Natural killer cell (primary cell): ENCODE measurements at regions of chr1 and their contacts with region 1.

Region 1: GRCh38 chr1:226827968-226828513 is 42.4 kb upstream of the PSEN2 start:
- DNase-seq: peak; percentile 92 to 97
- ATAC-seq: peak; percentile 98 to 100 (median 100)
- H3K4me3 ChIP-seq: no peak overlapping the region
- H3K4me3 Mint-ChIP-seq: peak overlapping the region; percentile 59
- H3K27ac ChIP-seq: peak overlapping the region; percentile 36
- H3K27ac Mint-ChIP-seq: peak overlapping the region; percentile 84
- H3K4me1 ChIP-seq: peaks cover 12% of the 10 kb centered on the region
- H3K4me1 Mint-ChIP-seq: peaks cover 8 to 14% of the 10 kb centered on the region in 2 donors
- H3K27me3 ChIP-seq: no peaks in the 10 kb centered on the region
- H3K27me3 Mint-ChIP-seq: no peaks in the 10 kb centered on the region
- CTCF ChIP-seq: peak; percentile 96

Region 2: DNA sequence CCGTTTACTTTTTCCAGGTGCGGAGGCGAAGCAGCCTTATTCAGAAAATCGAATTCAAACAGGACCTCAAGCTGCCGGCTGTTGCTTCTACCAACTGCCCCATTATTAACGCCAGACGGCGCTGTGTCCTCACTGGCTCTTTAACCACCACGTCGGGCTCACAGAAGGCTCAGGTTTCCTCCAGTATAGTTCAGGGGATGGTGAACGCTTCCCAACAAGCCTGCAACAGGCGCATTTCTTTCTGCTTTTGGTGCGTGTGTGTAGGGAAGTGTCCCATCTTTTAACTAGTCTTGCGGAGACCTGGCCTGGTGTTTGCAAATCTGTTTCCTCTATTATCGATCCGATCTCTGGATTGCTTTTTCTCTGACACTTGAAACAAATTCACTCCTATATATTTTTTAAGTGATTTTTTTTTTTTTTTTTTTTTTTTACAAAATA is 280.3 kb before region 1 on chr1:
- intact Hi-C with region 1: loop called (anchors 5 kb)
- DNase-seq: peak; percentile 45 to 80
- ATAC-seq: peak; percentile 68 to 81 (median 75)
- H3K4me3 ChIP-seq: no peak overlapping the region
- H3K4me3 Mint-ChIP-seq: peak overlapping the region; percentile 56
- H3K27ac ChIP-seq: no peak overlapping the region
- H3K27ac Mint-ChIP-seq: no peak overlapping the region
- H3K4me1 ChIP-seq: peaks cover 25% of the 10 kb centered on the region
- H3K4me1 Mint-ChIP-seq: peaks cover 6 to 17% of the 10 kb centered on the region in 2 donors
- H3K27me3 ChIP-seq: peaks cover 29% of the 10 kb centered on the region
- H3K27me3 Mint-ChIP-seq: peaks cover 42 to 51% of the 10 kb centered on the region in 2 donors
- CTCF ChIP-seq: peak; percentile 62

Region 3: GRCh38 chr1:226626577-226626956 is 201.5 kb before region 1 on chr1:
- intact Hi-C with region 1: loop called (anchors 1 kb)
- DNase-seq: peak; percentile 75 to 87
- ATAC-seq: peak; percentile 95 to 100 (median 97)
- H3K4me3 ChIP-seq: peak overlapping the region; percentile 28
- H3K4me3 Mint-ChIP-seq: peak overlapping the region; percentile 69
- H3K27ac ChIP-seq: no peak overlapping the region
- H3K27ac Mint-ChIP-seq: peak overlapping the region; percentile 38 to 51
- H3K4me1 ChIP-seq: peaks cover 9% of the 10 kb centered on the region
- H3K4me1 Mint-ChIP-seq: peaks cover 16 to 19% of the 10 kb centered on the region in 2 donors
- H3K27me3 ChIP-seq: no peaks in the 10 kb centered on the region
- H3K27me3 Mint-ChIP-seq: peaks cover 0 to 3% of the 10 kb centered on the region in 2 donors
- CTCF ChIP-seq: peak; percentile 97

Region 4: DNA sequence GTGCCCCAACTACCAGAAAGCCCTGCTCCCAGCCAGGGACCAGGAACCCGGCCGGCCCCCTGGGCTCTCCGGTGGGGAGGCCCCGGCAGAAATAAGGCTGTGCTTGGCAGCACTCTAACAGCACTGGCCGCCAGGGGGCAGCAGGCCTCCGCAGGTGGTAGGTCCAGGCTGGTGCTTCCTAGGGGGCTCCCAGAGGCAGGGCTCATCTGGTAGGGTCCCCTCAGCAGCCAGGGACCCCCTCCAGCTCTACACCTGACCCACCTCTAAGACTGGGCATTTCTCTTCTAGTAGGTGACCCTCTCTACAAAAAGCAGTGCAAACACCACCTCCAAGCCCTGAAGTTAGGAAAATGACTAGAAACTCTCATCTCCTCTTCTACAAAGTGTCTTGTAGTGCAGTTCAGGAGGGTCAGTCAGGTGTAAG is 193.9 kb before region 1 on chr1:
- intact Hi-C with region 1: loop called (anchors 1 kb)
- DNase-seq: peak; percentile 82 to 91
- ATAC-seq: peak; percentile 88 to 98 (median 92)
- H3K4me3 ChIP-seq: no peak overlapping the region
- H3K4me3 Mint-ChIP-seq: no peak overlapping the region
- H3K27ac ChIP-seq: peak overlapping the region; percentile 47
- H3K27ac Mint-ChIP-seq: peak overlapping the region; percentile 71 to 74
- H3K4me1 ChIP-seq: peaks cover 42% of the 10 kb centered on the region
- H3K4me1 Mint-ChIP-seq: peaks cover 20 to 26% of the 10 kb centered on the region in 2 donors
- H3K27me3 ChIP-seq: no peaks in the 10 kb centered on the region
- H3K27me3 Mint-ChIP-seq: no peaks in the 10 kb centered on the region
- CTCF ChIP-seq: peak; percentile 94

Region 5: GRCh38 chr1:226687426-226687825 is 140.6 kb before region 1 on chr1:
- intact Hi-C with region 1: loop called (anchors 2 kb)
- DNase-seq: peak; percentile 52 to 78
- ATAC-seq: peak; percentile 66 to 78 (median 78)
- H3K4me3 ChIP-seq: no peak overlapping the region
- H3K4me3 Mint-ChIP-seq: no peak overlapping the region
- H3K27ac ChIP-seq: peak overlapping the region; percentile 26
- H3K27ac Mint-ChIP-seq: peak overlapping the region; percentile 97 to 99
- H3K4me1 ChIP-seq: peaks cover 79% of the 10 kb centered on the region
- H3K4me1 Mint-ChIP-seq: peaks cover 94 to 98% of the 10 kb centered on the region in 2 donors
- H3K27me3 ChIP-seq: no peaks in the 10 kb centered on the region
- H3K27me3 Mint-ChIP-seq: no peaks in the 10 kb centered on the region
- CTCF ChIP-seq: peak; percentile 65

Region 6: GRCh38 chr1:226711976-226712741 is 115.9 kb before region 1 on chr1:
- intact Hi-C with region 1: loop called (anchors 5 kb)
- DNase-seq: peak; percentile 50 to 78
- ATAC-seq: peak; percentile 60 to 67 (median 67)
- H3K4me3 ChIP-seq: no peak overlapping the region
- H3K4me3 Mint-ChIP-seq: peak overlapping the region; percentile 77
- H3K27ac ChIP-seq: peak overlapping the region; percentile 64
- H3K27ac Mint-ChIP-seq: peak overlapping the region; percentile 78 to 91
- H3K4me1 ChIP-seq: peaks cover 66% of the 10 kb centered on the region
- H3K4me1 Mint-ChIP-seq: peaks cover 86 to 88% of the 10 kb centered on the region in 2 donors
- H3K27me3 ChIP-seq: no peaks in the 10 kb centered on the region
- H3K27me3 Mint-ChIP-seq: no peaks in the 10 kb centered on the region
- CTCF ChIP-seq: no peak

Region 7: DNA sequence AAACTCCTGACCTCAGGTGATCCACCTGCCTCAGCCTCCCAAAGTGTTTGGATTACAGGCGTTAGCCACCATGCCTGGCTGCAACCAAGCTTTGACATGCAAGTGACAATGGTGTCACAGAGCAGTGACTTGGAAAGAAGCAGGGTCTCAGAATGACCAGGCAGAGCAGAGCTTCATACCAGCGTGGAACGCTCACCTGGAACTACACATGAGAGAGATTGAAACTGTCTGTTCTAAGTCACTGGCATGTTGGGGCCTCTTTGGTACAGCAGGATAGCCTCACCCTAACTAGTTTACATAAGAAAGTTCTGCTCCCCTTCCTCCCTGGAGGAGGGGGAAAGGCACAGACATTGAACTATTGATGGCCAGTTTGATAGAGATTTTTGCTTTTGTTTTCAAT is 41.5 kb before region 1 on chr1:
- intact Hi-C with region 1: no loop called
- DNase-seq: no peak
- ATAC-seq: no peak
- H3K4me3 ChIP-seq: no peak overlapping the region
- H3K4me3 Mint-ChIP-seq: no peak overlapping the region
- H3K27ac ChIP-seq: no peak overlapping the region
- H3K27ac Mint-ChIP-seq: no peak overlapping the region
- H3K4me1 ChIP-seq: no peaks in the 10 kb centered on the region
- H3K4me1 Mint-ChIP-seq: no peaks in the 10 kb centered on the region
- H3K27me3 ChIP-seq: no peaks in the 10 kb centered on the region
- H3K27me3 Mint-ChIP-seq: no peaks in the 10 kb centered on the region
- CTCF ChIP-seq: no peak

Region 8: GRCh38 chr1:226882631-226883409 is 54.8 kb after region 1 on chr1:
- intact Hi-C with region 1: no loop called
- DNase-seq: peak in 1 of 2 donors; percentile 72
- ATAC-seq: peak; percentile 84 to 87 (median 85)
- H3K4me3 ChIP-seq: peak overlapping the region; percentile 26
- H3K4me3 Mint-ChIP-seq: peak overlapping the region; percentile 81
- H3K27ac ChIP-seq: peak overlapping the region; percentile 87
- H3K27ac Mint-ChIP-seq: peak overlapping the region; percentile 88 to 90
- H3K4me1 ChIP-seq: peaks cover 44% of the 10 kb centered on the region
- H3K4me1 Mint-ChIP-seq: peaks cover 38 to 41% of the 10 kb centered on the region in 2 donors
- H3K27me3 ChIP-seq: no peaks in the 10 kb centered on the region
- H3K27me3 Mint-ChIP-seq: no peaks in the 10 kb centered on the region
- CTCF ChIP-seq: no peak